ENCODE measurements at regions of chr19 and their contacts with region 1.

Region 1: DNA sequence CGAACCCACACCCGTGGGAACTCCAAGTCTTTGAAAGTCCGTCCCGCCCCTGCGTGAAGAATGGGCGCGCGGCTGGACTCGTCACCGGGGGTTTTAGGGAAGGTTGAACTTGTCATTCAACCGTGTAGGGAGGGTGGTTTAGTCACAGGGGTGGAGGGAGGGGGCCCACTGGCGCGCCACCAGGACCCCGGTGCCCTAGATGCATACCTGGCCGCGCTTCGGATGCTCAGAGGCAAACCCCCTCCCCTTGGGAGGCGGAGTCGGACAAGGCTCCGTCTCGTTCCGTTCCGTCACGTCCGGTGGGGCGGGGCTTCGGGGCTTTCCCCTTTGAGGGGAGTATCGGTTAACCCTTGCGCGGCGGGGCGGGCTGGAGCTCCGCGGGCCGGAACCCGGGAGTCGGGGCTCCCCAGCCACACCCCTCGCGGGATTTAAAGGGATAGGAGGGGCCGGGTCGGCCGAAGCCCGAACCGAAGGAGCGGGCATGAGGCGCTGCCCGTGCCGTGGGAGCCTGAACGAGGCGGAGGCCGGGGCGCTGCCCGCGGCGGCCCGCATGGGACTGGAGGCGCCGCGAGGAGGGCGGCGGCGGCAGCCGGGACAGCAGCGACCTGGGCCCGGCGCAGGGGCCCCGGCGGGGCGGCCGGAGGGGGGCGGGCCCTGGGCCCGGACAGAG is at the starts of genes COQ8B and ITPKC:
- DNase-seq: peak; percentile 98 to 99
- ATAC-seq: peak; percentile 67 to 68
- H3K4me3 ChIP-seq: peak within 1 kb of the TSS; percentile 64 to 90 (median 85)
- H3K27ac ChIP-seq: peak within 1 kb of the TSS; percentile 89 to 98 (median 92)
- H3K4me1 ChIP-seq: peaks cover 36 to 47% of the 10 kb centered on the region in 2 donors
- H3K27me3 ChIP-seq: no peaks in the 10 kb centered on the region
- CTCF ChIP-seq: peak in 2 of 5 experiments; percentile 34 to 47
- POLR2A ChIP-seq: peak; percentile 93 to 94
- total RNA-seq, gene COQ8B: 14.9 to 30.7 (median 20.2) TPM
- total RNA-seq, gene ITPKC: 14.9 to 34.5 (median 21.8) TPM

Region 2: GRCh38 chr19:40444192-40445028 is 272.4 kb before region 1 on chr19 and contains the start of gene SERTAD3:
- in situ Hi-C with region 1: no loop called
- intact Hi-C with region 1: loop called (anchors 10 kb)
- DNase-seq: peak; percentile 95 to 97
- ATAC-seq: peak; percentile 72 to 73
- H3K4me3 ChIP-seq: peak within 1 kb of the TSS; percentile 77 to 98 (median 92)
- H3K27ac ChIP-seq: peak within 1 kb of the TSS; percentile 96 to 99 (median 99)
- H3K4me1 ChIP-seq: peaks cover 15 to 24% of the 10 kb centered on the region in 2 donors
- H3K27me3 ChIP-seq: no peaks in the 10 kb centered on the region
- CTCF ChIP-seq: peak in 2 of 5 experiments; percentile 16 to 22
- POLR2A ChIP-seq: peak; percentile 99
- total RNA-seq, gene SERTAD3: 12.7 to 24.4 (median 18.1) TPM

Region 3: DNA sequence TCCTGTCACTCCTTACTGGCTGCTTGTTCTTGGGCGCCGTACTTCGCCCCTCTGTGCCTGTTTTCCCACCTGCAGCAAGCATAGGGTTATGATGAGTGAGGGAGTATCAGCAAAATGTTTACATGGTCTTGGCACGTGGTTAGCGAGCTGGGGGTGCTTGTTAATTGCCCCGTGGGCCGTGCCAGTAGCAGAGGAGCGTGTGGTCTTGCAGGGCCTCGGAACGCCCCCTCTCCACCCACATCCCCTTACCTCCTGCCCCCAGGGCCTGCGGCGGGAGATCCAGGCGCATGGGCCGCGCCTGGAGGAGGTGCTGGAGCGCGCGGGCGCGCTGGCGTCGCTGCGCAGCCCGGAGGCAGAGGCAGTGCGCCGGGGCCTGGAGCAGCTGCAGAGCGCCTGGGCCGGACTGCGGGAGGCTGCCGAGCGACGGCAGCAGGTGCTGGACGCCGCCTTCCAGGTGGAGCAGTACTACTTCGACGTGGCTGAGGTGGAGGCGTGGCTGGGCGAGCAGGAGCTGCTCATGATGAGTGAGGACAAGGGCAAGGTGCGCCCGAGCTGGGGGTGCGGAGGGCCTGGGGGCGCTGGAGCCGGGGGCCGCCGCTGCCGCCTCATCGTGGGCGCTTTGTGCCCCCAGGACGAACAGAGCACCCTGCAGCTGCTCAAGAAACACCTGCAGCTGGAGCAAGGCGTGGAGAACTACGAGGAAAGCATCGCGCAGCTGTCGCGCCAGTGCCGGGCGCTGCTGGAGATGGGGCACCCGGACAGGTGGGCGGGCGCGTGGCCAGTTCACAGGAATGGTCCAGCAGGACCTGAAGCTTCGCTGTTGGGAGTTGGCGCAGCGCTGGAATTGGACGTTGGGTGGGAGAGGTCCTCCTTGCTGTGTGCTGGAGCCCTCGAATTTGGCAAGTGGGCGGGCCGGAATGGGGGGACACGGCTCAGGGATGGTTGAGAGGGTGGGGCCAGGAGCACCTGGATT is 162.6 kb before region 1 on chr19:
- in situ Hi-C with region 1: no loop called
- intact Hi-C with region 1: no loop called
- DNase-seq: no peak
- ATAC-seq: no peak
- H3K4me3 ChIP-seq: no peak overlapping the region
- H3K27ac ChIP-seq: no peak overlapping the region
- H3K4me1 ChIP-seq: no peaks in the 10 kb centered on the region
- H3K27me3 ChIP-seq: peaks cover 0 to 6% (median 0%) of the 10 kb centered on the region in 3 donors
- CTCF ChIP-seq: no peak
- POLR2A ChIP-seq: no peak

Region 4: DNA sequence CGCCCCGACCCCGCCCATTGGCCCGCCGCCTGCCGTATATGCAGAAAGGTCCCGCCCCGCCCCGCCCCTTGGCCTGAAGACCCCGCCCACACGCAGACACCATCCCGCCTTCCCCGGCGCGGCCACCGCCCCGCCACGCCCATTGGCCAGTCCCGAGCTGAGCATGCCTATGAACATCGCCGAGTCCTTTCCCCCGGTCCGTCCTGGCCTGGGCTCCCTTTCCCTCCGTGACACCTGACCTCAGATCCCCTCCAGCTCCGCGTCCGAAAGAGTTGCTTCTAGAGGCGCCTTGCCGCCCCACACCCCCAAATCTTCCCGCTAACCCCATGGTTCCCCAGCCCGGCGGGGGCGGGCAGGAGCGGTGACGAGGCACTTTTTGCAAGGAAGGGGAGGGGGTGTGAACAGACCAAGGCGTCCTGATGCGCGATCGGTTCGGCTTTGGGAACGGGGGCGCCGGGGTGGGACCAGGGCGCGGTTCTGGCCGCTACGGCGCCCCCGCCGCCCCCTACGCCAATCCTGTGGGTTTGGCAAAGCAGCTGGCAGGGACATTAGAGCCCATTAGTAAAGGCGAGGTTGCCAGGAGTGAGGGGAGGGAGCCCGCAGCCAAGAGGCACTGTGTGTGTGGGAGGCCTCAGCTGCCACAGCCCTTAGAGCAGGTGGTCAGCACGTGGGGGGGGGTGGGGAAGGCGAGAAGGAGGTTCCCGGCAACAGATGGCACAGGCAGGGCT is 25.9 kb before region 1 on chr19:
- in situ Hi-C with region 1: no loop called
- intact Hi-C with region 1: loop called (anchors 1 kb)
- DNase-seq: peak; percentile 92 to 94
- ATAC-seq: peak; percentile 87 to 90
- H3K4me3 ChIP-seq: peak overlapping the region; percentile 66 to 92 (median 76)
- H3K27ac ChIP-seq: peak overlapping the region; percentile 90 to 98 (median 96)
- H3K4me1 ChIP-seq: peaks cover 9 to 22% of the 10 kb centered on the region in 2 donors
- H3K27me3 ChIP-seq: no peaks in the 10 kb centered on the region
- CTCF ChIP-seq: no peak
- POLR2A ChIP-seq: peak; percentile 49 to 53

Region 5: GRCh38 chr19:40777937-40778705 is 61.3 kb after region 1 on chr19 and contains the start of gene RAB4B:
- in situ Hi-C with region 1: no loop called
- intact Hi-C with region 1: loop called (anchors 1 kb)
- DNase-seq: peak; percentile 100
- ATAC-seq: peak; percentile 92
- H3K4me3 ChIP-seq: peak within 1 kb of the TSS; percentile 79 to 93 (median 89)
- H3K27ac ChIP-seq: peak within 1 kb of the TSS; percentile 93 to 99 (median 98)
- H3K4me1 ChIP-seq: peaks cover 7 to 14% of the 10 kb centered on the region in 2 donors
- H3K27me3 ChIP-seq: no peaks in the 10 kb centered on the region
- CTCF ChIP-seq: peak in 2 of 5 experiments; percentile 25 to 27
- POLR2A ChIP-seq: peak; percentile 76 to 81
- total RNA-seq, gene RAB4B: 14.9 to 27.2 (median 19.7) TPM

Measured in gastrocnemius medialis (tissue), 4 donors.